Ascending aorta (tissue), 2 donors: ENCODE measurements at regions of chr1 and their contacts with region 1.

Region 1: GRCh38 chr1:78145105-78145580 is 99.4 kb downstream of the GIPC2 start:
- DNase-seq: no peak
- H3K4me3 ChIP-seq: no peak overlapping the region
- H3K27ac ChIP-seq: no peak overlapping the region
- H3K4me1 ChIP-seq: no peaks in the 10 kb centered on the region
- H3K27me3 ChIP-seq: no peaks in the 10 kb centered on the region
- CTCF ChIP-seq: peak; percentile 46 to 83 (median 66)

Region 2: DNA sequence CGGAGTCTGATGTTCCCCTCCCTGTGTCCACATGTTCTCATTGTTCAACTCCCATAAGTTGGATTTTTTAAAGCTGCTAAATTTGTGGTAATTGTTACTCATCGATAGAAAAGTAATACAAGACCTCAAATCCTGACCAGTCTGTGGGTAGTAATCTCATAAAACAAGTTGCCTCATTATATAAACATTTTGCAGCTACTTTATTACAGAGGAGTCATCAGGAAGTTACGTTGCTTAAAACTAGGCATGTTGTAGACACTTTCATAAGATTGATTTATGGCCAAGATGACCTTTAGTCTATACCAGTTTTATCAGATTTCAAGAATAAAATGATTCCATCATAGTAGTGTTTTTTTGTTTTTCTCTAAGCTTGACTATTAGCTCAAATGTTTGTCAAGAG is 109.4 kb after region 1 on chr1:
- intact Hi-C with region 1: no loop called
- DNase-seq: no peak
- H3K4me3 ChIP-seq: no peak overlapping the region
- H3K27ac ChIP-seq: no peak overlapping the region
- H3K4me1 ChIP-seq: no peaks in the 10 kb centered on the region
- H3K27me3 ChIP-seq: no peaks in the 10 kb centered on the region
- CTCF ChIP-seq: no peak

Region 3: GRCh38 chr1:78607334-78607927 is 462.3 kb after region 1 on chr1:
- intact Hi-C with region 1: loop called (anchors 2 kb)
- DNase-seq: no peak
- H3K4me3 ChIP-seq: no peak overlapping the region
- H3K27ac ChIP-seq: no peak overlapping the region
- H3K4me1 ChIP-seq: no peaks in the 10 kb centered on the region
- H3K27me3 ChIP-seq: no peaks in the 10 kb centered on the region
- CTCF ChIP-seq: peak; percentile 9 to 44 (median 33)